ENCODE measurements at regions of chr2 and their contacts with region 1.

Region 1: DNA sequence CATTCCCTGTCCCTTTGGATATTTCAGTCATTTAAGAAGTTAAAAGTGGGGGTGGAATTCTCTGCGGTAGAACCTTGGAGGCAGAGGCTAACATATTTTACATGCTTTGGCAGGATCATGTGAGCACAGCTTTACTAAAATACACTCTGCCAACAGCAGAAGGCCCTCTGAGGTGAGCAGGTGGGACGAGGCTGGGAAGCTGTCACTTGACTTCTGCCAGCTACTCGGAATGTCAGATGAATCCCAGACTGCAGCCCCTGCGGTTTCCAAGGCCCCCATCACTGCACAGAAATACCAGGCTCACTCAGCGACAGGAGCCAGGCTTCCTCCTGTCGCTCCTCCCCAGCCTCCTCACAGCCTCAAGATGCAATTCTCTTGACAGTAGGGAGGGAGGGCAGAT is 220.9 kb upstream of the REV1 start:
- DNase-seq: no peak
- H3K4me3 ChIP-seq: no peak overlapping the region
- H3K27ac ChIP-seq: no peak overlapping the region
- H3K4me1 ChIP-seq: no peaks in the 10 kb centered on the region
- H3K27me3 ChIP-seq: no peaks in the 10 kb centered on the region
- CTCF ChIP-seq: no peak
- POLR2A ChIP-seq: no peak

Region 2: DNA sequence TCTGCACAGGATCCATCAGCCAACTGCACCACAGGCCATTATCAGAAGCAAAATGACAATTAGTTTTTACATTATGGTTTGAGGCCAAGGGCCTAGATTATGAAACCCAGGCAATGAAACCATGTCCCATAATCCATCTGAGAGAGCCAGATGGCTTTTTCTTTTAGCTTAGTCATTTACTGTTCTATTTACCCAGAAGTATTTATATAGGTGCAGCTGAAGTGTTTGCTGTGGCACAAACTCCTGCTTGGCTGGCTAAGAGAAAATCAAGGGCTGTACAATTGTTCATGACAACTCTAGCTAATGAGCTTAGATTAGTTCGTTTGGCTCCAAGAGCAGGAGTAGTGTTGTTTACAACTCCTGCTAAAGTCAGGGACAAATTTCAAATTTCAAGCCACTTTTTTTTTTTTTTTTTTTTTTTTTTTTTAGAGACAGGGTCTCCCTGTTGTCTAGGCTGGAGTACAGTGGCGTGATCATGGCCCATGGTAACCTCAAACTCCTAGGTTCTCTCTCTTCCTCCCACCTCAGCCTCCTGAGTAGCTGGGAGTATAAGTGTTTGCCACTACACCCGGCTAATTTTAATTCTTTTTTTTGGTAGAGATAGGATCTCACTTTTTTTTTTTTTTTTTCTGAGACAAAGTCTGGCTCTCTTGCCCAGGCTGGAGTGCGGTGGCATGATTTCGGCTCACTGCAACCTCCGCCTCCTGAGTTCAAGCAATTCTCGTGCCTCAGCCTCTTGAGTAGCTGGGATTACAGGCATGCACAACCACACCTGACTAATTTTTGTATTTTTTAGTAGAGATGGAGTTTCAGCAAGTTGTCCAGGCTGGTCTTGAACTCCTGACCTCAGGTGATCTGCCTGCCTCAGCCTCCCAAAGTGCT is 202.5 kb before region 1 on chr2:
- CTCF ChIA-PET with region 1: no interaction called
- POLR2A ChIA-PET with region 1: interaction called, 11 read pairs
- dilution Hi-C with region 1: no loop called
- intact Hi-C with region 1: no loop called
- DNase-seq: no peak
- H3K4me3 ChIP-seq: no peak overlapping the region
- H3K27ac ChIP-seq: no peak overlapping the region
- H3K4me1 ChIP-seq: no peaks in the 10 kb centered on the region
- H3K27me3 ChIP-seq: peaks cover 0 to 14% of the 10 kb centered on the region in 2 experiments
- CTCF ChIP-seq: no peak
- POLR2A ChIP-seq: no peak

Region 3: GRCh38 chr2:99648178-99648844 is 62.4 kb before region 1 on chr2:
- CTCF ChIA-PET with region 1: no interaction called
- POLR2A ChIA-PET with region 1: no interaction called
- dilution Hi-C with region 1: no loop called
- intact Hi-C with region 1: no loop called
- DNase-seq: no peak
- H3K4me3 ChIP-seq: no peak overlapping the region
- H3K27ac ChIP-seq: no peak overlapping the region
- H3K4me1 ChIP-seq: no peaks in the 10 kb centered on the region
- H3K27me3 ChIP-seq: peaks cover 0 to 3% of the 10 kb centered on the region in 2 experiments
- CTCF ChIP-seq: no peak
- POLR2A ChIP-seq: no peak

Region 4: DNA sequence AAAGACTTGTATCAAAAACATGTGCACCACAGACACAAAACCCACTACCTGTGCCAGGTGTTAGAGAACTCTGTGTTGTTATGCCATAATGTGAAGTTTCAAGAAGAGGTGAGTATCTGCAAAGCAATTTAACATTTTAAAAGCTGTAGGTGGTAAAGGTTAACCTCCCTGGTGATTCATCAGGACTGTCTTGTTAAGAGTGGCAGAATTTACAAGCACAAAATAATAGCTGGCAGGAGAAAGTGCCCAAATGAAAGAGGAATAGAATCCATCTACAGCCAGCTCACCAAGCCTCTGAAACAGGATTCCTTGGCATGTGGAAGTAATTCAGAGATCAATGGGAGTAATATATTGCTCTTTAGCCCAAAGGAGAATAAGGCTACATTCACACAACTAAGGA is 201.0 kb after region 1 on chr2:
- CTCF ChIA-PET with region 1: no interaction called
- POLR2A ChIA-PET with region 1: no interaction called
- dilution Hi-C with region 1: no loop called
- intact Hi-C with region 1: no loop called
- DNase-seq: no peak
- H3K4me3 ChIP-seq: no peak overlapping the region
- H3K27ac ChIP-seq: no peak overlapping the region
- H3K4me1 ChIP-seq: no peaks in the 10 kb centered on the region
- H3K27me3 ChIP-seq: peaks cover 0 to 4% of the 10 kb centered on the region in 2 experiments
- CTCF ChIP-seq: no peak
- POLR2A ChIP-seq: no peak

Region 5: GRCh38 chr2:99926986-99927385 is 216.3 kb after region 1 on chr2:
- CTCF ChIA-PET with region 1: no interaction called
- POLR2A ChIA-PET with region 1: no interaction called
- dilution Hi-C with region 1: no loop called
- intact Hi-C with region 1: no loop called
- DNase-seq: no peak
- H3K4me3 ChIP-seq: no peak overlapping the region
- H3K27ac ChIP-seq: no peak overlapping the region
- H3K4me1 ChIP-seq: no peaks in the 10 kb centered on the region
- H3K27me3 ChIP-seq: peaks cover 2 to 3% of the 10 kb centered on the region in 2 experiments
- CTCF ChIP-seq: no peak
- POLR2A ChIP-seq: no peak

Measured in endothelial cell of umbilical vein (primary cell).